ENCODE measurements at regions of chr21 and their contacts with region 1.

Region 1: GRCh38 chr21:29372063-29372802 is 73.5 kb downstream of the BACH1 start:
- DNase-seq: peak; percentile 84
- H3K4me3 ChIP-seq: no peak overlapping the region
- H3K27ac ChIP-seq: no peak overlapping the region
- H3K4me1 ChIP-seq: no peaks in the 10 kb centered on the region
- CTCF ChIP-seq: peak; percentile 86

Region 2: DNA sequence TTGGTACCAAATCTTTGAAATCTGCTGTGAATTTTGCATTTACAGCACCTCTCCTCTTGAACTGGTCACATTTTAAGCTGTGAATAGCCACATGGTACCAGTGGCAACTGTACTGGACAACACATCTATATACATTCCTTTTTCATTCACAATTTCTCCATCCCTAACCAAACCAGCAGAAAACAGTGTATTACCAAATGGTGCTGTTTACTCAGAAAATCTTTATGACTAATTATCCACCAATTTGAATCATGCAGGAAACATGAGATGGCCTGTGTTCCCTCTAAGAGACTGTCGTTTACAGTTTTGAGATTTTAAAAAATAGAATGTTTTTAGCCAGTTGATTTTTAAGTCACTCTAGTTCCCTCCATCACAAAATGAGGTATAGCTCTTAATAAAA is 281.2 kb before region 1 on chr21:
- CTCF ChIA-PET with region 1: interaction called, 5 read pairs
- POLR2A ChIA-PET with region 1: interaction called, 6 read pairs
- intact Hi-C with region 1: loop called (anchors 1 kb)
- DNase-seq: no peak
- H3K4me3 ChIP-seq: no peak overlapping the region
- H3K27ac ChIP-seq: no peak overlapping the region
- H3K4me1 ChIP-seq: no peaks in the 10 kb centered on the region
- CTCF ChIP-seq: no peak

Region 3: GRCh38 chr21:29232601-29233546 is 139.4 kb before region 1 on chr21:
- CTCF ChIA-PET with region 1: interaction called, 3 read pairs
- POLR2A ChIA-PET with region 1: no interaction called
- intact Hi-C with region 1: loop called (anchors 10 kb)
- DNase-seq: peak; percentile 4
- H3K4me3 ChIP-seq: no peak overlapping the region
- H3K27ac ChIP-seq: no peak overlapping the region
- H3K4me1 ChIP-seq: no peaks in the 10 kb centered on the region
- CTCF ChIP-seq: peak; percentile 44; the same call in 1 of the 2 replicates

Region 4: GRCh38 chr21:29258626-29259335 is 113.5 kb before region 1 on chr21:
- CTCF ChIA-PET with region 1: no interaction called
- POLR2A ChIA-PET with region 1: no interaction called
- intact Hi-C with region 1: loop called (anchors 2 kb)
- DNase-seq: no peak
- H3K4me3 ChIP-seq: no peak overlapping the region
- H3K27ac ChIP-seq: no peak overlapping the region
- H3K4me1 ChIP-seq: no peaks in the 10 kb centered on the region
- CTCF ChIP-seq: no peak

Region 5: GRCh38 chr21:29298348-29299045 is 73.7 kb before region 1 on chr21 and contains the start of gene BACH1:
- CTCF ChIA-PET with region 1: interaction called, 3 read pairs
- POLR2A ChIA-PET with region 1: interaction called, 3 read pairs
- intact Hi-C with region 1: loop called (anchors 2 kb)
- DNase-seq: peak; percentile 90
- H3K4me3 ChIP-seq: peak within 1 kb of the TSS; percentile 71
- H3K27ac ChIP-seq: peak within 1 kb of the TSS; percentile 11
- H3K4me1 ChIP-seq: peaks cover 48% of the 10 kb centered on the region
- CTCF ChIP-seq: peak; percentile 32; the same call in 1 of the 2 replicates
- total RNA-seq, gene BACH1: 18.6 and 19.1 TPM in 2 replicates

Region 6: GRCh38 chr21:29342363-29342957 is 29.8 kb before region 1 on chr21:
- CTCF ChIA-PET with region 1: no interaction called
- POLR2A ChIA-PET with region 1: no interaction called
- intact Hi-C with region 1: no loop called
- DNase-seq: no peak
- H3K4me3 ChIP-seq: no peak overlapping the region
- H3K27ac ChIP-seq: no peak overlapping the region
- H3K4me1 ChIP-seq: no peaks in the 10 kb centered on the region
- CTCF ChIP-seq: no peak

Region 7: DNA sequence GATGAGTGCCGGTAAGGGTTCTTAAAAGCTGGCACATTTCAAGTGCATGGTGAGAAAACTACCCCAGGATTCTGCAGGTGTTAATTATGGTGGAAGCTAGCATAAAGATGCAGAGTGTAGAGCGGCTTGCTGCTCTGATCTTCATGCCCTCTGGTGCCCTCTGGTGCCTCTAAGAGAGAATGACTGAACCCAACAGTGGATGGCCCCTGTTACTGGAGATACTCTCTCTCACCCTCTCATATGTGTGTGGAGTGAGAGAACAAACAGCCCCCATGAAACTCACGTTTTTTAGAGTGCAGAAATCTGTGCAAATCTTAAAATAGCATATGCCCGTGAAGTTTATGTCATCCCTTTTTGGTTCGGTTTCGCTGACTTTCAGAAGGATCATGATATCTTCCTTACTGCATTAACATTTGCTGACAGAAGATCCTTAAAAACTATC is 477.5 kb after region 1 on chr21:
- CTCF ChIA-PET with region 1: interaction called, 3 read pairs
- POLR2A ChIA-PET with region 1: no interaction called
- intact Hi-C with region 1: loop called (anchors 10 kb)
- DNase-seq: peak; percentile 70
- H3K4me3 ChIP-seq: no peak overlapping the region
- H3K27ac ChIP-seq: no peak overlapping the region
- H3K4me1 ChIP-seq: no peaks in the 10 kb centered on the region
- CTCF ChIP-seq: peak; percentile 88

Measured in OCI-LY7 (cell line).